MCF 10A (cell line): ENCODE measurements at regions of chr18 and their contacts with region 1.

Region 1: GRCh38 chr18:49178736-49179135 is 228.0 kb upstream of the SMAD7 start:
- DNase-seq: peak; percentile 30
- H3K4me3 Mint-ChIP-seq: no peak overlapping the region
- H3K27ac Mint-ChIP-seq: no peak overlapping the region
- H3K4me1 Mint-ChIP-seq: peaks cover 12% of the 10 kb centered on the region
- H3K27me3 Mint-ChIP-seq: no peaks in the 10 kb centered on the region
- CTCF ChIP-seq: peak; percentile 62

Region 2: GRCh38 chr18:49055754-49056172 is 123.0 kb before region 1 on chr18:
- CTCF ChIA-PET with region 1: interaction called, 4 read pairs
- POLR2A ChIA-PET with region 1: interaction called, 3 read pairs
- intact Hi-C with region 1: loop called (anchors 10 kb)
- DNase-seq: peak; percentile 75
- H3K4me3 Mint-ChIP-seq: peak overlapping the region; percentile 23
- H3K27ac Mint-ChIP-seq: peak overlapping the region; percentile 10
- H3K4me1 Mint-ChIP-seq: peaks cover 5% of the 10 kb centered on the region
- H3K27me3 Mint-ChIP-seq: no peaks in the 10 kb centered on the region
- CTCF ChIP-seq: no peak